T-cell (primary cell): ENCODE measurements at regions of chr1 and their contacts with region 1.

Region 1: GRCh38 chr1:8848663-8849386 is 29.7 kb downstream of the ENO1 start:
- DNase-seq: peak; percentile 22 to 86 (median 65)
- ATAC-seq: peak; percentile 83 to 95 (median 88)
- H3K4me3 ChIP-seq: no peak overlapping the region
- H3K4me3 Mint-ChIP-seq: no peak overlapping the region
- H3K27ac ChIP-seq: no peak overlapping the region
- H3K27ac Mint-ChIP-seq: no peak overlapping the region
- H3K4me1 ChIP-seq: peaks cover 0 to 12% of the 10 kb centered on the region in 2 experiments
- H3K4me1 Mint-ChIP-seq: peaks cover 3 to 11% (median 3%) of the 10 kb centered on the region in 3 donors
- H3K27me3 ChIP-seq: peaks cover 0 to 16% of the 10 kb centered on the region in 2 experiments
- H3K27me3 Mint-ChIP-seq: no peaks in the 10 kb centered on the region

Region 2: DNA sequence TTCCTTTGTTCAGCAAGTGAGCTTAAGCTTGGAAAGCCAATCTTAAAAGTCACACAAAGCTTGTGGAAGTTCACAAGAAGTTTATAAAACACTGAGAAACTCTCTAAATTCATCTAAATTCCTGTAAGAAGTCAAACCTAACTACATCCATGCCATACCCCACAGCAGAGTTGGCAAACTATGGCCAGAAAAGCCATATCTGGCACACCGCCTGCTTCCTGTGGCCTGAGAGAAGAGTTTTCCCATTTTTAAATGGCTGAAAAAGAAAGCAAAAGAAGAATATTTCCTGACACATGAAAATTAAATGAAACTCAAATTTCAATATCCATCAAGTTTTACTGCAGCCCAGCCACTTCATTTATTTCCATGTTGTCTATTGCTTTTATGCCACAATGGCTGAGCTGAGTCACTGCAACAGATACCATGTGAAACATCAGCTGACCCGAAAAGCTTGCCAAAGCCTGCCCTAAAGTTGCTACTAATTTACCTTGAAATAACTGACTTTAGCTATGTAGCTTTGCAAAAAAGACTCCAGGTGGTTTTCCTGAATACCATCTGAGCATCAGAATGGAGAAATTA is 293.8 kb before region 1 on chr1:
- CTCF ChIA-PET with region 1: interaction called, 3 to 10 read pairs
- POLR2A ChIA-PET with region 1: interaction called in 1 of 2 experiments, 3 read pairs
- DNase-seq: no peak
- ATAC-seq: no peak
- H3K4me3 ChIP-seq: no peak overlapping the region
- H3K4me3 Mint-ChIP-seq: no peak overlapping the region
- H3K27ac ChIP-seq: no peak overlapping the region
- H3K27ac Mint-ChIP-seq: no peak overlapping the region
- H3K4me1 ChIP-seq: peaks cover 4 to 8% of the 10 kb centered on the region in 2 experiments
- H3K4me1 Mint-ChIP-seq: peaks cover 22 to 26% (median 24%) of the 10 kb centered on the region in 3 donors
- H3K27me3 ChIP-seq: no peaks in the 10 kb centered on the region
- H3K27me3 Mint-ChIP-seq: no peaks in the 10 kb centered on the region

Region 3: GRCh38 chr1:8560611-8561544 is 287.9 kb before region 1 on chr1:
- CTCF ChIA-PET with region 1: interaction called, 7 to 55 read pairs
- POLR2A ChIA-PET with region 1: interaction called in 1 of 2 experiments, 3 read pairs
- DNase-seq: peak in 22 of 35 experiments; percentile 6 to 74 (median 21)
- ATAC-seq: peak; percentile 44 to 75 (median 70)
- H3K4me3 ChIP-seq: no peak overlapping the region
- H3K4me3 Mint-ChIP-seq: no peak overlapping the region
- H3K27ac ChIP-seq: no peak overlapping the region
- H3K27ac Mint-ChIP-seq: no peak overlapping the region
- H3K4me1 ChIP-seq: peaks cover 0 to 5% of the 10 kb centered on the region in 2 experiments
- H3K4me1 Mint-ChIP-seq: peaks cover 7 to 16% (median 12%) of the 10 kb centered on the region in 3 donors
- H3K27me3 ChIP-seq: no peaks in the 10 kb centered on the region
- H3K27me3 Mint-ChIP-seq: no peaks in the 10 kb centered on the region

Region 4: DNA sequence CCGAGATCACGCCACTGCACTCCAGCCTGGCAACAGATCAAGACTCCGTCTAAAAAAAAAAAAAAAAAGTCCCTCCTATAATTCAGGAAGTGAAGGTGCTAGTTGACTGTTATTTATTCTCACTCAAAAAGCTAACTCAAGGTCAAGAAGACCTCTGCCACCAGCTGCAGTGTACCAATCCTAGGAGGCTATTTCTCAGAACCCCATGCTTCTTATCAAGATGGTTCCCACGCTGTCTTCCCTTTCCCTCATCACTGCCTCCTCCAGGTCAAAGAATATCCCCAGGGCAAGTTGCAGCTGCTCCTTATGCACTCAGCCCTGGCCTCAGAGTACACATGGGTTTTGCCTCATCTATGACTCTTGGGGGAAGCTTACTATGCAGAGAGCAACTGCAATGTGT is 84.9 kb before region 1 on chr1:
- CTCF ChIA-PET with region 1: no interaction called
- POLR2A ChIA-PET with region 1: no interaction called
- DNase-seq: no peak
- ATAC-seq: no peak
- H3K4me3 ChIP-seq: no peak overlapping the region
- H3K4me3 Mint-ChIP-seq: no peak overlapping the region
- H3K27ac ChIP-seq: no peak overlapping the region
- H3K27ac Mint-ChIP-seq: no peak overlapping the region
- H3K4me1 ChIP-seq: no peaks in the 10 kb centered on the region
- H3K4me1 Mint-ChIP-seq: peaks cover 5 to 12% (median 5%) of the 10 kb centered on the region in 3 donors
- H3K27me3 ChIP-seq: no peaks in the 10 kb centered on the region
- H3K27me3 Mint-ChIP-seq: no peaks in the 10 kb centered on the region